ENCODE measurements at regions of chr1 and their contacts with region 1.

Region 1: GRCh38 chr1:72037745-72038343 is 244.5 kb downstream of the NEGR1 start:
- DNase-seq: peak; percentile 56
- H3K4me3 ChIP-seq: no peak overlapping the region
- H3K27ac ChIP-seq: no peak overlapping the region
- H3K4me1 ChIP-seq: no peaks in the 10 kb centered on the region
- H3K27me3 ChIP-seq: no peaks in the 10 kb centered on the region
- CTCF ChIP-seq: peak; percentile 36

Region 2: GRCh38 chr1:71093938-71094337 is 943.9 kb before region 1 on chr1:
- intact Hi-C with region 1: loop called (anchors 5 kb)
- DNase-seq: no peak
- H3K4me3 ChIP-seq: no peak overlapping the region
- H3K27ac ChIP-seq: no peak overlapping the region
- H3K4me1 ChIP-seq: no peaks in the 10 kb centered on the region
- H3K27me3 ChIP-seq: no peaks in the 10 kb centered on the region
- CTCF ChIP-seq: peak; percentile 23

Region 3: GRCh38 chr1:71196685-71197084 is 841.2 kb before region 1 on chr1:
- intact Hi-C with region 1: loop called (anchors 10 kb)
- DNase-seq: no peak
- H3K4me3 ChIP-seq: no peak overlapping the region
- H3K27ac ChIP-seq: no peak overlapping the region
- H3K4me1 ChIP-seq: no peaks in the 10 kb centered on the region
- H3K27me3 ChIP-seq: no peaks in the 10 kb centered on the region
- CTCF ChIP-seq: peak; percentile 27

Region 4: GRCh38 chr1:71587961-71588360 is 449.9 kb before region 1 on chr1:
- intact Hi-C with region 1: loop called (anchors 5 kb)
- DNase-seq: no peak
- H3K4me3 ChIP-seq: no peak overlapping the region
- H3K27ac ChIP-seq: no peak overlapping the region
- H3K4me1 ChIP-seq: no peaks in the 10 kb centered on the region
- H3K27me3 ChIP-seq: no peaks in the 10 kb centered on the region
- CTCF ChIP-seq: no peak

Region 5: DNA sequence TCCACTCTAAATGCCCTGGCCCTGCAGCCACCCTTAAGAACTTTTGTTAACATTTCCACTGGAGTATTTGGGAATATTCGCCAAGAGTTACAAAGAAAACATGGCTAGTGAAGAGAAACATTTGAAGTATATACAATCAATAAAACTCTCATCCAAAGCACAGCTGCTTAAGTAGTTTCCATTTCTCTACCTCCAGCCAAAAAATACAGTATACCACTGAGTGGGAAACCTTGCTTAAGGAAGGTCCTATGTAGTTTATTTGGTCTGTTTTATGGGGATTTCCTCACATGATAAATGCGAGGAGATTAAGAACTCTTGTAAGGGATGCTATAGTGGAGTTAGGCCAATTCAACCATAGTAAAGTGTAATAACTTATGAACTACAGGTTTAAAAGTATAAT is 138.0 kb before region 1 on chr1:
- intact Hi-C with region 1: no loop called
- DNase-seq: no peak
- H3K4me3 ChIP-seq: no peak overlapping the region
- H3K27ac ChIP-seq: no peak overlapping the region
- H3K4me1 ChIP-seq: no peaks in the 10 kb centered on the region
- H3K27me3 ChIP-seq: no peaks in the 10 kb centered on the region
- CTCF ChIP-seq: no peak

Measured in colonic mucosa (tissue), 4 donors.